ENCODE measurements at regions of chr3 and their contacts with region 1.

Region 1: GRCh38 chr3:57755668-57756527 is at the start of gene SLMAP:
- DNase-seq: peak; percentile 89
- H3K4me3 ChIP-seq: peak within 1 kb of the TSS; percentile 90 to 98 (median 98)
- H3K27ac ChIP-seq: peak within 1 kb of the TSS; percentile 95 to 98 (median 97)
- H3K4me1 ChIP-seq: peaks cover 0 to 83% (median 29%) of the 10 kb centered on the region in 3 donors
- H3K27me3 ChIP-seq: no peaks in the 10 kb centered on the region
- CTCF ChIP-seq: no peak
- POLR2A ChIP-seq: peak in 3 of 4 donors; percentile 63 to 82 (median 77)
- total RNA-seq, gene SLMAP: 46.9 to 162 (median 67.9) TPM

Region 2: GRCh38 chr3:57130571-57131209 is 625.2 kb before region 1 on chr3:
- intact Hi-C with region 1: no loop called
- DNase-seq: no peak
- H3K4me3 ChIP-seq: no peak overlapping the region
- H3K27ac ChIP-seq: no peak overlapping the region
- H3K4me1 ChIP-seq: peaks cover 0 to 19% (median 3%) of the 10 kb centered on the region in 3 donors
- H3K27me3 ChIP-seq: no peaks in the 10 kb centered on the region
- CTCF ChIP-seq: no peak
- POLR2A ChIP-seq: no peak

Region 3: DNA sequence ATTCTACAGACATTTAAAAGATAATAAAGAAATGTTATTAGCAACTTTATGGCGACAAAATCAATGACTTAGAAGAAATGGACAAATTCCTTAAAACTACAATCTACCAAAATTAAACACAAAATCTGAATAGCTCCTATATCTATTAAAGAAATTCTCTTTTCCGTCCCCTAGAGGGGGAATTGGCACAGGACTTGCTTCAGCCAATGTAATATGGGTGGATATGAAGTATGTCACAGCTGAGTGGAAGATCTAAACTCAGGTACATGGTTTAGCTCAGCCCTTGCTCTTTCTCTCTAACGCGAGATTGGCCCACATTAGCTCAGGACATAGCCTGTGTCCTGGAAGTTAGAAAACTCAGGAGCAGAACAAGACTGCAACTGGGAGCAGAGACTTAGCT is 291.1 kb before region 1 on chr3:
- intact Hi-C with region 1: no loop called
- DNase-seq: no peak
- H3K4me3 ChIP-seq: no peak overlapping the region
- H3K27ac ChIP-seq: no peak overlapping the region
- H3K4me1 ChIP-seq: no peaks in the 10 kb centered on the region
- H3K27me3 ChIP-seq: no peaks in the 10 kb centered on the region
- CTCF ChIP-seq: no peak
- POLR2A ChIP-seq: no peak

Region 4: GRCh38 chr3:57597122-57597923 is 158.6 kb before region 1 on chr3 and contains the start of gene ARF4:
- intact Hi-C with region 1: loop called (anchors 5 kb)
- DNase-seq: peak; percentile 94
- H3K4me3 ChIP-seq: peak within 1 kb of the TSS; percentile 72 to 92 (median 81)
- H3K27ac ChIP-seq: peak within 1 kb of the TSS; percentile 94 to 99 (median 98)
- H3K4me1 ChIP-seq: peaks cover 3 to 53% (median 37%) of the 10 kb centered on the region in 3 donors
- H3K27me3 ChIP-seq: no peaks in the 10 kb centered on the region
- CTCF ChIP-seq: peak in 2 of 6 experiments; percentile 9 to 52
- POLR2A ChIP-seq: peak; percentile 52 to 99 (median 90)
- total RNA-seq, gene ARF4: 65.1 to 113 (median 88.2) TPM

Region 5: GRCh38 chr3:57692259-57693147 is 63.4 kb before region 1 on chr3 and contains the start of gene DENND6A:
- intact Hi-C with region 1: loop called (anchors 2 kb)
- DNase-seq: peak; percentile 32
- H3K4me3 ChIP-seq: peak within 1 kb of the TSS; percentile 73 to 100 (median 91)
- H3K27ac ChIP-seq: peak within 1 kb of the TSS; percentile 95 to 100 (median 98)
- H3K4me1 ChIP-seq: peaks cover 32 to 73% (median 32%) of the 10 kb centered on the region in 3 donors
- H3K27me3 ChIP-seq: no peaks in the 10 kb centered on the region
- CTCF ChIP-seq: peak in 3 of 6 experiments; percentile 10 to 25 (median 21)
- POLR2A ChIP-seq: peak in 3 of 4 donors; percentile 97 to 99 (median 98)
- total RNA-seq, gene DENND6A: 18.6 to 36.0 (median 24.4) TPM

Measured in esophagus squamous epithelium (tissue), 5 donors.